ENCODE measurements at regions of chr1 and their contacts with region 1.

Region 1: DNA sequence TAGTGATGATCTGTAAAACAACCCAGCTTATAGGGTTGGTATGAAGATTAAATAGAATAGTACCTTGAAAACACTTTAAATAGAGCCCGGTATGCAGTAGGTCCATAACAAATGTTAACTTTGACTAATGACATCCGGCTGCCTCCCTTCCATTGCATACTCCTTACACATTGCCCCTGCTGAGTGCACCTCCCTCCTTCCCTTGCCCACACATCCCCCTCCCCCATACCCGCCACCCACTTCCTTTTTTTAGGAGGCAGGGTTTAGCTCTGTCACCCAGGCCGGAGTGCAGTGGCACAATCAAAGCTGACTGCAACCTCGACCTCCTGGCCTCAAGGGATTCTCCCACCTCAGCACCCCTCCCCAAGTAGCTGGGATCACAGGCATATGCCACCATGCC is 24.4 kb upstream of the ZC3H12A start:
- DNase-seq: no peak
- H3K4me3 ChIP-seq: no peak overlapping the region
- H3K27ac ChIP-seq: peak overlapping the region in 1 of 2 donors; percentile 57
- H3K4me1 ChIP-seq: no peaks in the 10 kb centered on the region
- H3K27me3 ChIP-seq: peaks cover 0 to 4% of the 10 kb centered on the region in 2 donors
- CTCF ChIP-seq: no peak
- POLR2A ChIP-seq: no peak

Region 2: GRCh38 chr1:35864813-35865212 is 1585.1 kb before region 1 on chr1:
- intact Hi-C with region 1: loop called (anchors 10 kb)
- DNase-seq: no peak
- H3K4me3 ChIP-seq: no peak overlapping the region
- H3K27ac ChIP-seq: no peak overlapping the region
- H3K4me1 ChIP-seq: no peaks in the 10 kb centered on the region
- H3K27me3 ChIP-seq: no peaks in the 10 kb centered on the region
- CTCF ChIP-seq: no peak
- POLR2A ChIP-seq: no peak

Region 3: GRCh38 chr1:36924282-36924811 is 525.6 kb before region 1 on chr1:
- intact Hi-C with region 1: no loop called
- DNase-seq: peak in 1 of 2 donors; percentile 57
- H3K4me3 ChIP-seq: no peak overlapping the region
- H3K27ac ChIP-seq: no peak overlapping the region
- H3K4me1 ChIP-seq: no peaks in the 10 kb centered on the region
- H3K27me3 ChIP-seq: no peaks in the 10 kb centered on the region
- CTCF ChIP-seq: no peak
- POLR2A ChIP-seq: no peak

Region 4: DNA sequence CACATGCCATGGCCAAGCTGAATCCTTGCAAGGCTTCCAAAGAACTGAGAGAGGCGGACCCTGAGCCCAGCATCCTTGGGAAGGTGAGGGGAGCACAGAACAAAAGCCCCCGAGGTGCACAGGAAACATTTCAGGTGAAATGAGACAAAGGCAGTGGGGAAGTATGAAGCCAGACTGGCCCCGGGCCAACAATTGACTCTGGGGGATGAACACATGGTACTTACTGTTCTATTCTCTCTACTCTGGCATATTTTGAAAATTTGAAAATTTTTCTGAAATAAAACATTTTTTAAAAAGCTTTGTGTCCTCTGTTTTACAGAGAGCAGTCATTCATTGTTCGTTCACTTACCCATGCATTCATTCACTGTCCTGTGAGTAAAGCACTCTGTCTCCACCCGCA is 493.4 kb before region 1 on chr1:
- intact Hi-C with region 1: no loop called
- DNase-seq: no peak
- H3K4me3 ChIP-seq: no peak overlapping the region
- H3K27ac ChIP-seq: no peak overlapping the region
- H3K4me1 ChIP-seq: no peaks in the 10 kb centered on the region
- H3K27me3 ChIP-seq: no peaks in the 10 kb centered on the region
- CTCF ChIP-seq: no peak
- POLR2A ChIP-seq: no peak

Region 5: DNA sequence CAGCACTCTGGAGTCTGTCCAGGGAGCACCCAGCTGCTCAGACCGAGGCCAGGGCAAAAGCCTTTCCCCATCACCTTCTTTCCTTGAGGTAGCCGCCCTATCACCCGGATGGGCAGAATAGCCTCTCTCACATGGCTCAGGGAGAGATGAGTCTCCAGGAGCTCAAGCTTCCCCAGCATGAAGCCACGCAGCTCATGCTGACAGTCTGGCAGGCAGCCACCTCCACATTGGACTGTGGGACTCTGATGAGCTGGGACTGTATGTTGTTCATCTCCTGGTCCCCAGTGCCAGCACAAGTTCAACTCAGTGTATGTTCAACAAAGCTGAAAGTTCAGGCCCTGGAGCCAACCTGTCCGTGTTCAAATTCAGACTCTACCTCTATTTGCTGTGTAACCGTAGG is 50.7 kb before region 1 on chr1:
- intact Hi-C with region 1: no loop called
- DNase-seq: no peak
- H3K4me3 ChIP-seq: no peak overlapping the region
- H3K27ac ChIP-seq: no peak overlapping the region
- H3K4me1 ChIP-seq: no peaks in the 10 kb centered on the region
- H3K27me3 ChIP-seq: peaks cover 0 to 5% of the 10 kb centered on the region in 2 donors
- CTCF ChIP-seq: no peak
- POLR2A ChIP-seq: no peak

Region 6: GRCh38 chr1:37682334-37682987 is 232.5 kb after region 1 on chr1:
- intact Hi-C with region 1: loop called (anchors 10 kb)
- DNase-seq: peak; percentile 59 to 67
- H3K4me3 ChIP-seq: no peak overlapping the region
- H3K27ac ChIP-seq: no peak overlapping the region
- H3K4me1 ChIP-seq: no peaks in the 10 kb centered on the region
- H3K27me3 ChIP-seq: no peaks in the 10 kb centered on the region
- CTCF ChIP-seq: peak; percentile 88 to 94 (median 93)
- POLR2A ChIP-seq: no peak

Region 7: DNA sequence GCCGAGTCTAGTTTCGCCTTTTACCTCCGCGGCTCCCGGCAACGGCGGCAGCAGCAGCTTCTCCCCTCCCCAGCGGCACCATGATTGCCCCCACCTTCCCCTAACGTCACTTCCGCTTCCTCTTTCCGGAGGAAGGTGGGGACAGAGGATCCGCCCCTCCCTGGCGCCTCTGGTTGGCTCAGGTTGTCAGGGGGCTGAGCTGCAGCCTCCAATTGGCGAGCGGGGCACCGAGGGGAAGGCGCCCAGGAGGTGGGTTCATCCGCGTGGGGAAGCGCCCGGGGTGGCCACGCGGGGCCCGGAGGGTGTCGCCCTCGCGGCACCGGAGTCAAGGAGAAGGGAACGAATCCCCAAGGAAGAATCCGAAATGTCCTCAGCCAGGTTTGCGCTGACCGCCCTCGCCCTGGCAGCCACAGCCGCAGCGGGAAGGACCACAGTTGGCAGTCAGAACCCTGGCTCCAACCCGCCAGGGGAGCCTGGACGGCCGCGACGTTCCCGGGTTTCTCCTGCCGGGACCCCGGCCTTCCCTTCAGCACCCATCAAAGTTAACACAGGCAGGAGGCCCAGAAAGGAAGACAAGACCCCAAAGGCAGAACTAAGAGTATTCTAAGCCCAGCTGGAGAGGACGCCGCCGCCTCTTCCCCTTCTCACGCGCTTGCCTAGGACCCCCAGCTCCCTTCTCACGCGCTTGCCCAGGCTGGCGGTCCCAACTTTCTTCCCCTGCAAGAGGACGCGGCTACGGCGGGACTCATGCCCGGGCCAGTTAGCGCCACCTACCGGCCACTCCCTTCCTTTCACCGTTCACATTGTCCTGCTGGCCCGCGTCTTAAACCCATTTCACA is 409.8 kb after region 1 on chr1 and contains the start of gene MTF1:
- intact Hi-C with region 1: no loop called
- DNase-seq: peak; percentile 96 to 97
- H3K4me3 ChIP-seq: peak within 1 kb of the TSS; percentile 70 to 93 (median 85)
- H3K27ac ChIP-seq: peak within 1 kb of the TSS; percentile 93 to 95
- H3K4me1 ChIP-seq: peaks cover 0 to 16% of the 10 kb centered on the region in 2 donors
- H3K27me3 ChIP-seq: no peaks in the 10 kb centered on the region
- CTCF ChIP-seq: peak; percentile 81 to 92 (median 90)
- POLR2A ChIP-seq: peak; percentile 72
- total RNA-seq, gene MTF1: 4.9 to 5.3 (median 5.0) TPM